ENCODE measurements at regions of chr1 and their contacts with region 1.

Region 1: DNA sequence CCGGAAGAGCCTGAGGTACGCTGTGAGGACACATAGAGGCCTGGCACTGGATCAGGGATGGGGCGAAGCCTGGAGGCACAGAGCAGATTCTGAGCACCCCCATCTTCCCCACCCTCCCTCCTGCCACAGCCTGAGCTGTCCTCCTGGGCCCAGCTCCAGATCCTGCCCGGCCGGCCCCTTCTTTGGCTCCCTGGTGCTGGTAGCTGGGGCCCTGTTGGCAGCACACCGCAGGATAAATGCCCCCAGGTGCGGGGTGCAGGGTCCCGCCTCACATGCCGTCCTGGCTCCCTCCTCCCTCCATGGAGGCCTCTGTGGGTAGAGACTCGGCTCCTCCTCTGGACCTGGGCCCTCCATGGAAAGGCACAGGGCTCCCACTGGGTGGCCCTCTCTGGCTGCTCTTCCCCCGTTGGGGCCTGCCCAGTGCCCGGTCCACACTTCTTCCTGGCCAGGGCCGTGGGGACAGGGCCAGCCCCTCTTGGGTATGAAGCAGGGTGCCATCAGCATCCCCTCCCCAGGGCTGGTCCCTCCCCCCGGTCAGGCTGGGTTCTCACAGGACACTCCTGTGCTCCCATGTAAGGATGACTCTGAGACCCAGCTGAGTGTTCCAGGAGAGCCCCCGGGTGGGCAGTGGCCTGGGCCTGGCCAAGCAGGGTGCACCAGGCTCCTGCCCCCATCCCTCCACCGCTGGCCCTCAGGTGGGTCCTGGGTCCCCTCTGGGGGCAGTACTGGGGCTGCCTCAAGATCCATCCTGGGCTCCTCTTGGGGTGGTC is 1.1 kb upstream of the OBSCN start:
- DNase-seq: no peak
- ATAC-seq: peak; percentile 4 to 16

Region 2: GRCh38 chr1:228165372-228166169 is 41.2 kb before region 1 on chr1 and contains the start of gene IBA57:
- intact Hi-C with region 1: loop called in 1 of 2 experiments (anchors 5 kb)
- DNase-seq: peak; percentile 99
- ATAC-seq: peak; percentile 92 to 93
- total RNA-seq, gene IBA57: 10.4 to 10.5 TPM